Body of pancreas (tissue), 4 donors: ENCODE measurements at regions of chr20 and their contacts with region 1.

Region 1: GRCh38 chr20:5448449-5449118 is 131.8 kb upstream of the PROKR2 start:
- DNase-seq: peak; percentile 58 to 69 (median 62)
- ATAC-seq: peak; percentile 47
- H3K4me3 ChIP-seq: no peak overlapping the region
- H3K27ac ChIP-seq: no peak overlapping the region
- H3K4me1 ChIP-seq: no peaks in the 10 kb centered on the region
- H3K27me3 ChIP-seq: no peaks in the 10 kb centered on the region
- CTCF ChIP-seq: peak; percentile 47 to 65 (median 55)
- POLR2A ChIP-seq: no peak

Region 2: DNA sequence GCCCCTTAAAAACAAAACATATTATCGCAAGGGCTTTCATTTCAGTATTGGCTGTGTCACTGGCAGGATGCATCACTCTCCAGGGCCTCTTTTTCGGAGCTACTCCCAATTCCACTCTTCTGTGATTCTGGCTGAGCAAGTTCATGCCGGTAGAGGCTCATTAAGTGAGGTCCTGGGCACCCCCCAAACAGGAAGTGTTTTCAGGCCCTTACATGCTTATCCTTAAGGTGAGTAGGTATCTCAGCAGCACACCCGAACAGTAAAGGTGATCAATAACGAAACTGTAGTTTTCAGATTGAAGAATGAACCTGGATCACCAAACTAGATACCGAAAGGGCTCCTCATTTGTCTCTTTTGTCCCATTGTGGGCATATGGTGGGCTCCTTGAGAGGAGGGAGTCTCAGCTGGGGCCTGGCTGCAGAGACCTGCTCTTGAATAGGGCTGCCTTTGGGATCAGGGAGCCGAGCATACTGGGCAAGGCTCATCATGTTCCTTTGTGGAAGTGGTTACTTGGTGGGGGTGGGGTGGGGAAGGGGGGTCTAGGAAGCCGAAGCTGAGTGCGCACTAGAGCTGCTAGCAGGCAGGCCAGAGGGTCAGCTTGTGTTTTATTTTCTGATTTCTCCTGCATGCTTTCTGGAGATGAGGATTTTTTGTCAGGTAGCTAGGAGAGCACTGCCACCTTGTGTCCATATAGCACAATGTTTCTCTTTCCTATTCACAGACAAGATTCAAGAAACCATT is 256.6 kb before region 1 on chr20:
- intact Hi-C with region 1: loop called (anchors 10 kb)
- DNase-seq: peak; percentile 32 to 59 (median 37)
- ATAC-seq: peak; percentile 87
- H3K4me3 ChIP-seq: no peak overlapping the region
- H3K27ac ChIP-seq: peak overlapping the region in 2 of 4 donors; percentile 12 to 25
- H3K4me1 ChIP-seq: peaks cover 4% of the 10 kb centered on the region
- H3K27me3 ChIP-seq: no peaks in the 10 kb centered on the region
- CTCF ChIP-seq: peak; percentile 65 to 86 (median 83)
- POLR2A ChIP-seq: no peak

Region 3: GRCh38 chr20:5657190-5657875 is 208.7 kb after region 1 on chr20:
- intact Hi-C with region 1: no loop called
- DNase-seq: peak in 3 of 4 donors; percentile 8 to 70 (median 20)
- ATAC-seq: peak; percentile 65
- H3K4me3 ChIP-seq: no peak overlapping the region
- H3K27ac ChIP-seq: peak overlapping the region in 3 of 4 donors; percentile 44 to 72 (median 62)
- H3K4me1 ChIP-seq: peaks cover 13% of the 10 kb centered on the region
- H3K27me3 ChIP-seq: no peaks in the 10 kb centered on the region
- CTCF ChIP-seq: no peak
- POLR2A ChIP-seq: peak in 1 of 3 donors; percentile 22